ENCODE measurements at regions of chr14 and their contacts with region 1.

Region 1: GRCh38 chr14:65824285-65824977 is 411.9 kb downstream of the FUT8 start:
- DNase-seq: peak; percentile 70
- H3K4me3 ChIP-seq: peak overlapping the region in 1 of 2 experiments; percentile 36; a peak in 1 of 4 replicates
- H3K27ac ChIP-seq: no peak overlapping the region
- H3K4me1 ChIP-seq: no peaks in the 10 kb centered on the region
- H3K27me3 ChIP-seq: peaks cover 5% of the 10 kb centered on the region; the same call in 1 of the 2 replicates
- CTCF ChIP-seq: peak; percentile 90
- EP300 ChIP-seq: no peak
- RAD21 ChIP-seq: peak; percentile 86

Region 2: DNA sequence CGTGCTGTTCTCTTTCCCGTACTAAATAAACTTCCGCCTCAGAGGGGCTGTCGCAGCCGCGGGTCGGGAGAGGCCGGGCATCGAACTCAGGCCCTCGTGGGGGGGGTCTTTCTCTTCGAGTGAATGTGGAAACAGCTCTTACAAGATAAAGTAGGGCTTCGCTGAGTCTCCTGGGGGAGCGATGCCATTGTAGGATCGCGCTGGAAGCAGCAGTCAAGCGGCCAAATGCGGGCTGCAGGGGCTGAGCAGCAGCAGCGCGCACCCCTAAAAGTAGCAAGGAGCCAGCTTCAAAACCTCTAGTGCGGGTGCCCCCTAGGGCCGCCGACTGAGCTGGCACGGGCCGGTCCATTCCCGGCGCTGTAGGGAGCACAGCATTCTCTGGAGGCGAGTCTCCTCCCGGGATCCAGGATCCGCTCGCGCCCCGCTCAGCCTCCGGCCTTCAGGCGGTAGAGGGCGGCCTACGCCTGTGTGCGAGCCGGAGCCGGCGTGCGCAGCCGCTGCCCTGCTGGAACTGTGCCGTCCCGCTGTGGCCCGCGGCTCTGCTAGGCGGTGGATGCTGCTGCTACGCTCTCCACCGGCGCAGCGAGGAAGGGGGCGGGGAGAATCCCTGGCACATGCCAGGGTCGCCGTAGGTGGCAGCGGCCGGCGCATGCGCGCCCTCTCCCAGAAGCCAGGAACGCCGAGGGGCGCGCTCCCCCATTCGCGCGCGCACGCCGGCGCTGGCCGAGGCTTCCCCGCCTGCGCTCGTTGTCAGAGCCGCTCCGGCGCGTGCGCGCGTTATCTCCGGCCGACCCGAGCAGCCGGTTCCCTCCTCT is 412.2 kb before region 1 on chr14 and contains the start of gene FUT8:
- CTCF ChIA-PET with region 1: interaction called, 174 read pairs
- POLR2A ChIA-PET with region 1: interaction called, 3 read pairs
- DNase-seq: peak; percentile 95
- H3K4me3 ChIP-seq: peak within 1 kb of the TSS; percentile 94 to 95
- H3K27ac ChIP-seq: peak within 1 kb of the TSS; percentile 91 to 97
- H3K4me1 ChIP-seq: peaks cover 0 to 6% of the 10 kb centered on the region in 2 experiments; a peak in 2 of 4 replicates
- H3K27me3 ChIP-seq: no peaks in the 10 kb centered on the region
- CTCF ChIP-seq: peak; percentile 65
- EP300 ChIP-seq: peak; percentile 13 to 46; a peak in 2 of 4 replicates
- RAD21 ChIP-seq: peak; percentile 71
- polyA plus RNA-seq, gene FUT8: 31.7 and 32.4 TPM in 2 replicates

Region 3: DNA sequence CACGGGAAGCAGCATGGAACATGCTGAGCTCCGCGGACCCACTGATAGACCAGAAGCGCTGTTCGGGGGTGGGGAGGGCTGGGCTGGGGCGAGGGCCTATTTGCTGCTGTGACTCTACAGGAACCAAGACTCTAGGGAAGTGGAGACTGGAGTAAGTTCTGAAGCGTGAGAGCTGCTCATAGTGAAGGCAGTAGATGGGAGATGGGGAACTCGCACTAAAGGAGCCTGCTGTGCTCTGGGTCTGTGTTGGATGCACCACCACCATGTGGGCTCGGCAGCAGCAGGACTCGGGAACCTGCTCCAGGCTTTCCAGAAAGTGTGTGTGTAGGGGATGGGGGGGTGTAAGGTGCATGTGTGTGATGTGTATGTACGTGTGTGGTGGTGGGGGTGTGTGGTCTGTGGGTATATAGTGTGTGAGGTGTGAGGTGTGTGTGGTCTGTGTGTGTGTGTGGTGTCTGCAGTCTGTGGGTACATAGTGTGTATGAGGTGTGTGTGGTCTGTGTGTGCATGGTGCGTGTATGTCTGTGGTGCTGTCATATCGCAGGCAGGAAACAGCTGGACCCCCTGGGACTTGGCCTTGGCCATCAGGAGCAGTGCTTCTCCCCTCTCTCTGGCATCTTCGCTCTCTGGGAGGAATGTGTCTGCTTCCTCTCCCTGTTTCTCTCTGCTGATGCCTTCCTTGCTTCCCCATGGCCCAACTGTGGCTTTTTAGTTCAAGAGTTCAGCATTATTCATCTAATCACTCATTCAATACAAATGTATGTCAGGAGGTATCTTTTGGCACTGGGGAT is 33.0 kb before region 1 on chr14:
- CTCF ChIA-PET with region 1: interaction called, 22 read pairs
- POLR2A ChIA-PET with region 1: no interaction called
- DNase-seq: peak; percentile 21
- H3K4me3 ChIP-seq: no peak overlapping the region
- H3K27ac ChIP-seq: peak overlapping the region in 1 of 2 experiments; percentile 48; a peak in 1 of 4 replicates
- H3K4me1 ChIP-seq: peaks cover 7 to 22% of the 10 kb centered on the region in 2 experiments
- H3K27me3 ChIP-seq: no peaks in the 10 kb centered on the region
- CTCF ChIP-seq: no peak
- EP300 ChIP-seq: no peak
- RAD21 ChIP-seq: no peak

Region 4: DNA sequence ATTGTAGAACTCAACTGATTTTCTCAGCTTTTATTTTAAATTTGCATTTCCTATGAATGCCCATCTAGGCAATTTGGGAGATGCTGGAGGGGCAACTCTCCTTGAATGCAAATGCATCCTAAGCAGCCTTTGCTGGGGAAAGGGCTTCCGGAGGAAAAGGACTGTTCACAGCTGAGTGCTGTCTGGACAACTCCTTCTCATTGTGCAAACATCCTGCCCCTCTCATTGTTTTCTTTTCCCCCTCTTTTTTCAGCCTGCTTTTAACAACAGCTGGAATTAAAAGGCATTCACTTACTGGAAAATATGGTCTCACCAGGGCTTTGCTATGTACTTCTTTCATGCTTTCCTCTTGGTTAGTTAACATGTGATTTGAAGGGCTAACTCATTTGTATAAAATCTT is 14.1 kb before region 1 on chr14:
- CTCF ChIA-PET with region 1: interaction called, 30 read pairs
- POLR2A ChIA-PET with region 1: no interaction called
- DNase-seq: no peak
- H3K4me3 ChIP-seq: no peak overlapping the region
- H3K27ac ChIP-seq: no peak overlapping the region
- H3K4me1 ChIP-seq: no peaks in the 10 kb centered on the region
- H3K27me3 ChIP-seq: no peaks in the 10 kb centered on the region
- CTCF ChIP-seq: no peak
- EP300 ChIP-seq: no peak
- RAD21 ChIP-seq: no peak

Region 5: DNA sequence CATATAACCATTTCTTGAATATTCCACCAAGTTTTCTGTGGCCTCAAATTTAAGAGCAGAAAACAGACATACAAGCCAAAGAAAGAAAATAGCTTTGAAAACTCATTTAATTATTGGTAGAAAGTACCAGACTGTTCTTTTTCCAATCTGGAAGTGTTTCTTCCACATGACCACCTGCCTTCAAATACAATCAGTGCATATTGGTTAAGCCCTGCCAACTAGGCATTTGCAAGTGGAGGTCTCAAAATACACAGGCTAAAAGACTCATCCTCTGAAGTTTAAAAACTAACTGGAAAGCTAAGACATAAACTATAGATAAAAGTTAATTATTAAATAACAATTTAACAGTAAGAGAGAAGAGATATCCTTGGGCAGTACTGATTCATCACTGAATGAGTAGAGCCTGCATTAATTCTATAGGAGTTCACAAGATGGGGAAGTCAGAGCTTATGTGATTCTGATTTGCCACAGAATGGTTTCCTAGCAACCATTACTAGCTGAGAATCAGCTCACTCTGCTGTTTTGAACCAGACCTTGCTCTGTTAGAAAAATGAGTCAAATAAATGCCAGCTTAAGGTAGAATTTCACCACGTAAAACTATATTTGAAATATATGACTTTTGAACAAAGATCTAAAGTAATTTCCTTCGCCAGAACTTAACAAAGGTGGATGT is 21.9 kb after region 1 on chr14:
- CTCF ChIA-PET with region 1: interaction called, 20 read pairs
- POLR2A ChIA-PET with region 1: no interaction called
- DNase-seq: peak; percentile 21
- H3K4me3 ChIP-seq: no peak overlapping the region
- H3K27ac ChIP-seq: no peak overlapping the region
- H3K4me1 ChIP-seq: peaks cover 0 to 8% of the 10 kb centered on the region in 2 experiments; a peak in 1 of 4 replicates
- H3K27me3 ChIP-seq: no peaks in the 10 kb centered on the region
- CTCF ChIP-seq: no peak
- EP300 ChIP-seq: no peak
- RAD21 ChIP-seq: no peak

Measured in SK-N-SH (cell line).